B cell (primary cell): ENCODE measurements at regions of chr16 and their contacts with region 1.

Region 1: GRCh38 chr16:28193530-28194423 is 18.0 kb downstream of the XPO6 start:
- DNase-seq: no peak
- ATAC-seq: no peak
- H3K4me3 ChIP-seq: peak overlapping the region in 4 of 5 experiments; percentile 6 to 66 (median 28)
- H3K4me3 Mint-ChIP-seq: peak overlapping the region; percentile 87
- H3K27ac ChIP-seq: peak overlapping the region; percentile 86 to 92
- H3K27ac Mint-ChIP-seq: peak overlapping the region; percentile 96
- H3K4me1 ChIP-seq: peaks cover 66 to 76% of the 10 kb centered on the region in 2 donors
- H3K4me1 Mint-ChIP-seq: peaks cover 78% of the 10 kb centered on the region
- H3K27me3 ChIP-seq: no peaks in the 10 kb centered on the region
- H3K27me3 Mint-ChIP-seq: no peaks in the 10 kb centered on the region
- CTCF ChIP-seq: no peak

Region 2: GRCh38 chr16:28164140-28164539 is 29.6 kb before region 1 on chr16:
- CTCF ChIA-PET with region 1: interaction called, 8 read pairs
- POLR2A ChIA-PET with region 1: interaction called, 3 read pairs
- intact Hi-C with region 1: loop called (anchors 5 kb)
- DNase-seq: no peak
- ATAC-seq: no peak
- H3K4me3 ChIP-seq: no peak overlapping the region
- H3K4me3 Mint-ChIP-seq: no peak overlapping the region
- H3K27ac ChIP-seq: peak overlapping the region; percentile 3 to 77
- H3K27ac Mint-ChIP-seq: peak overlapping the region; percentile 46
- H3K4me1 ChIP-seq: peaks cover 48 to 53% of the 10 kb centered on the region in 2 donors
- H3K4me1 Mint-ChIP-seq: peaks cover 70% of the 10 kb centered on the region
- H3K27me3 ChIP-seq: no peaks in the 10 kb centered on the region
- H3K27me3 Mint-ChIP-seq: no peaks in the 10 kb centered on the region
- CTCF ChIP-seq: no peak

Region 3: DNA sequence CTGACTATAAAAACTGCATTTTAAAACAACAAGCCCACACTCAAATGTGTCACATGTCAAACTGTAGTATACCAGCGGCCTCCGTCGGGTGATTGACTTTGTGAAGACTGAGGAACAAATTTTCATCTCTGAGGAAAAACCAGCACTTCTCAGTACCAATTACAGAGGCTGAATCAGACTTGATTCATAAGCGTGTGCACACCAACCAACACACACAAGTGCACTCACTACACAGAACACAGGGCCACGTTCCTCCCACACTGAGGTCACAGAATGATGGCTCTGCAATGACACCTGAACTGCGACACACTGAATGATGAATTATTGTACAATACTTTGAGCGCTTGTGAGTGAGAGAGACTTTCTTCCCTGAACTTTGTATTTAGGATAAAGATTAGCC is 11.6 kb before region 1 on chr16:
- CTCF ChIA-PET with region 1: interaction called, 7 read pairs
- POLR2A ChIA-PET with region 1: interaction called, 10 read pairs
- intact Hi-C with region 1: no loop called
- DNase-seq: no peak
- ATAC-seq: no peak
- H3K4me3 ChIP-seq: no peak overlapping the region
- H3K4me3 Mint-ChIP-seq: peak overlapping the region; percentile 17
- H3K27ac ChIP-seq: peak overlapping the region; percentile 87 to 90
- H3K27ac Mint-ChIP-seq: peak overlapping the region; percentile 98
- H3K4me1 ChIP-seq: peaks cover 54 to 66% of the 10 kb centered on the region in 2 donors
- H3K4me1 Mint-ChIP-seq: peaks cover 79% of the 10 kb centered on the region
- H3K27me3 ChIP-seq: no peaks in the 10 kb centered on the region
- H3K27me3 Mint-ChIP-seq: no peaks in the 10 kb centered on the region
- CTCF ChIP-seq: no peak

Region 4: GRCh38 chr16:28303132-28303531 is 109.4 kb after region 1 on chr16:
- CTCF ChIA-PET with region 1: no interaction called
- POLR2A ChIA-PET with region 1: interaction called, 10 read pairs
- intact Hi-C with region 1: no loop called
- DNase-seq: no peak
- ATAC-seq: no peak
- H3K4me3 ChIP-seq: no peak overlapping the region
- H3K4me3 Mint-ChIP-seq: no peak overlapping the region
- H3K27ac ChIP-seq: no peak overlapping the region
- H3K27ac Mint-ChIP-seq: no peak overlapping the region
- H3K4me1 ChIP-seq: no peaks in the 10 kb centered on the region
- H3K4me1 Mint-ChIP-seq: no peaks in the 10 kb centered on the region
- H3K27me3 ChIP-seq: no peaks in the 10 kb centered on the region
- H3K27me3 Mint-ChIP-seq: peaks cover 10% of the 10 kb centered on the region
- CTCF ChIP-seq: no peak